ENCODE measurements at regions of chr11 and their contacts with region 1.

Region 1: GRCh38 chr11:126194121-126194543 is 17.3 kb downstream of the RPUSD4 start:
- ATAC-seq: peak; percentile 64 to 88 (median 70)
- H3K4me3 ChIP-seq: no peak overlapping the region
- H3K27ac ChIP-seq: no peak overlapping the region
- H3K4me1 ChIP-seq: no peaks in the 10 kb centered on the region

Region 2: DNA sequence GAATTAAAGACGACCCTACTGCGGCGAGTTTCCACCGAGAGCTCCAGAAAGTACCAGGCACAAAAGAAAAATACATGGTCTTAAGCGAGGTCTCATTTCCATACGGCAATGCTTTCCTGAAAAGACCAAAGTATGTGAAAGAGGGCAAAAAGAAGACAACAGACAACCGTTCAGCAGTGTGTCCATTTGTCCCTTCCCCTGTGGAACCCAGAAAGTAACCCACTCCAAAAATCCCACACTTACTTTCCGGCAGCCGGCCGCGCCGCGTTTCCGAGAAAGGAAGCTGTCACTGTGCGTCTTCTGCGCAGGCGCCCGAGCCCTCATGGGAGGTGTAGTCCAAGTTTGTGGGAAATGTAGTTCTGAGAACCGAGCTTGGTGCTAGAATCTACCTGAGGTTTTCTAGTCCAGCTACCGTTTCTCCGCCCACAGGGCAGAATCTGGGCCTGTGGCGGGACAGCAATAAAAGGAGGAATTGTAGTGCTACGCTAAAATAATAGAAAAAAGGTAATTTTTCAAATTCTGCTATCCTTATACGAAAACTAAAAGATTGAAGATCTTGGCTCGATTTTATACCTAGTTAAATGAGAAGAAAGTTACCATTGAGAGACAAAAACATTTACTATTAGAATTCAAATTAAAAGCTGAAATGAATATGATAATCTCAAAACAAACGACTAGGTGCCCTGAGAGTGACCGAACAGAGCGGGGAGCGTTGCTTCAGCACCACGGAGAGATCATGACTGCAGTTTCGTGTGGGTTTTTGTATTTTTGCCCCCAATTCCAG is 291.0 kb before region 1 on chr11 and contains the start of gene PUS3:
- in situ Hi-C with region 1: loop called in 1 of 9 experiments (anchors 25 kb)
- ATAC-seq: peak; percentile 64 to 92 (median 80)
- H3K4me3 ChIP-seq: peak within 1 kb of the TSS; percentile 47 to 82 (median 63)
- H3K27ac ChIP-seq: peak within 1 kb of the TSS; percentile 10 to 50
- H3K4me1 ChIP-seq: peaks cover 5 to 6% of the 10 kb centered on the region in 2 donors
- total RNA-seq, gene PUS3: 11.9 to 24.3 (median 15.9) TPM

Region 3: GRCh38 chr11:125923012-125923579 is 271.0 kb before region 1 on chr11:
- in situ Hi-C with region 1: loop called (anchors 5 to 25 kb)
- ATAC-seq: peak; percentile 49 to 88 (median 74)
- H3K4me3 ChIP-seq: no peak overlapping the region
- H3K27ac ChIP-seq: no peak overlapping the region
- H3K4me1 ChIP-seq: no peaks in the 10 kb centered on the region

Region 4: GRCh38 chr11:125941619-125942611 is 252.2 kb before region 1 on chr11:
- in situ Hi-C with region 1: loop called in 1 of 9 experiments (anchors 25 kb)
- ATAC-seq: peak; percentile 30 to 88 (median 64)
- H3K4me3 ChIP-seq: no peak overlapping the region
- H3K27ac ChIP-seq: no peak overlapping the region
- H3K4me1 ChIP-seq: peaks cover 0 to 9% of the 10 kb centered on the region in 2 donors

Region 5: GRCh38 chr11:126062679-126063506 is 131.2 kb before region 1 on chr11 and contains the start of gene CDON:
- in situ Hi-C with region 1: loop called in 1 of 9 experiments (anchors 25 kb)
- ATAC-seq: peak; percentile 90 to 95 (median 92)
- H3K4me3 ChIP-seq: peak within 1 kb of the TSS; percentile 57 to 85 (median 71)
- H3K27ac ChIP-seq: peak within 1 kb of the TSS; percentile 96
- H3K4me1 ChIP-seq: peaks cover 17 to 26% of the 10 kb centered on the region in 2 donors
- total RNA-seq, gene CDON: 1.3 to 16.9 (median 10.3) TPM

Measured in motor neuron (in vitro differentiated cells).